Activated CD4-positive, alpha-beta memory T cell treated with anti-CD3 and anti-CD28 coated beads for 36 hours (primary cell): ENCODE measurements at regions of chr1 and their contacts with region 1.

Region 1: GRCh38 chr1:1906185-1907097 is 8.6 kb upstream of the CALML6 start:
- DNase-seq: peak; percentile 82
- H3K4me3 Mint-ChIP-seq: peak overlapping the region; percentile 24
- H3K27ac Mint-ChIP-seq: peak overlapping the region; percentile 42
- H3K4me1 Mint-ChIP-seq: peaks cover 10% of the 10 kb centered on the region
- H3K27me3 Mint-ChIP-seq: no peaks in the 10 kb centered on the region

Region 2: GRCh38 chr1:1777950-1778662 is 128.3 kb before region 1 on chr1 and contains the start of gene NADK:
- CTCF ChIA-PET with region 1: interaction called, 24 read pairs
- POLR2A ChIA-PET with region 1: interaction called, 6 read pairs
- intact Hi-C with region 1: loop called (anchors 2 kb)
- DNase-seq: peak; percentile 74
- H3K4me3 Mint-ChIP-seq: peak within 1 kb of the TSS; percentile 82
- H3K27ac Mint-ChIP-seq: peak within 1 kb of the TSS; percentile 83
- H3K4me1 Mint-ChIP-seq: peaks cover 62% of the 10 kb centered on the region
- H3K27me3 Mint-ChIP-seq: no peaks in the 10 kb centered on the region
- total RNA-seq, gene NADK: 56.2 to 57.4 TPM

Region 3: GRCh38 chr1:1786836-1787605 is 119.4 kb before region 1 on chr1:
- CTCF ChIA-PET with region 1: interaction called, 11 read pairs
- POLR2A ChIA-PET with region 1: interaction called, 3 read pairs
- intact Hi-C with region 1: no loop called
- DNase-seq: no peak
- H3K4me3 Mint-ChIP-seq: no peak overlapping the region
- H3K27ac Mint-ChIP-seq: no peak overlapping the region
- H3K4me1 Mint-ChIP-seq: peaks cover 13% of the 10 kb centered on the region
- H3K27me3 Mint-ChIP-seq: no peaks in the 10 kb centered on the region

Region 4: GRCh38 chr1:1826356-1827088 is 79.9 kb before region 1 on chr1:
- CTCF ChIA-PET with region 1: interaction called, 10 read pairs
- POLR2A ChIA-PET with region 1: interaction called, 3 read pairs
- intact Hi-C with region 1: no loop called
- DNase-seq: no peak
- H3K4me3 Mint-ChIP-seq: no peak overlapping the region
- H3K27ac Mint-ChIP-seq: peak overlapping the region; percentile 51
- H3K4me1 Mint-ChIP-seq: peaks cover 58% of the 10 kb centered on the region
- H3K27me3 Mint-ChIP-seq: no peaks in the 10 kb centered on the region

Region 5: DNA sequence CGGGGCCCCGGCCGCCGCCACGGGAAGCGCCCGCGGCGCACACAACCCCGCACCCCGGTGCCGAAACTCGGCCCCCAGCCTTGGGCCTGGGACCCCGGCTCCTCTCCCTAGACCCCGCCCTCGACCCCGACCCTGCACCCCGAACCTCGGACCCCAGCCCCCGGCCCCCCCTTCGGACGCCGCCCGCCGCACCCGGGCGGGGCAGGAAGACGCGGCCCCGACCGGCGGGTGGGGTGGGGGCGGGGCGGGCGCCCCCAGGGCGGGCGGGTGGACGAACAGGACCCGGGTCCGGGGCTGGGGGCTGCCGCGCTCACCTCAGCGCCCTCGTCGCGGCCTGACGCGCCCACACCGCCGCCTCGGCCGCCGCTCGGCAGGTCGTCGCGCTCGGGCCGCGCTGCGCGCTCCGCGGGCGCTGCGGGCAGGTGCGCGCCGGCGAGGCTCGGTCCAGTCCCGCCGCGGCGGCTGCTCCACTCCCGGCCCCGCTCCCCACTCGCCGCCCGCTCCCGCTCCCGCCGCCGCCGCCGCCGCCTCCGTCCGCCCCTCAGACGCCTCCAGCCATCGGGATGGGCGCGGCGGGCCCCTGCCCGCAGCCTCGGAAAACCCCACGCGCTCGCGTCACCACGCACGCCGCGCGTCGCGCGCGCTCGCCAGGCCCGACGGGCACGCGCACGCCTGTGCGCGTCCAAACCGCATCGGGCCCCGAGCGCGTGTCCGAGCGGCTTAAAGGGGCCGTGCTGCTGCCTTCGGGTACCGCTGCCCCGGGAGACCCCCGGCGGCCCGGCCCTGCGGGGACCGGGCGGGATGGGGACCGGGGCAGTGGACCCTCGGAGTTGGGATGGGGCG is 15.7 kb before region 1 on chr1 and contains the start of gene GNB1:
- CTCF ChIA-PET with region 1: interaction called, 12 read pairs
- POLR2A ChIA-PET with region 1: no interaction called
- intact Hi-C with region 1: loop called (anchors 2 kb)
- DNase-seq: peak; percentile 90
- H3K4me3 Mint-ChIP-seq: peak within 1 kb of the TSS; percentile 81
- H3K27ac Mint-ChIP-seq: peak within 1 kb of the TSS; percentile 88
- H3K4me1 Mint-ChIP-seq: peaks cover 49% of the 10 kb centered on the region
- H3K27me3 Mint-ChIP-seq: no peaks in the 10 kb centered on the region
- total RNA-seq, gene GNB1: 396 to 403 TPM